ENCODE measurements at regions of chr20 and their contacts with region 1.

Region 1: DNA sequence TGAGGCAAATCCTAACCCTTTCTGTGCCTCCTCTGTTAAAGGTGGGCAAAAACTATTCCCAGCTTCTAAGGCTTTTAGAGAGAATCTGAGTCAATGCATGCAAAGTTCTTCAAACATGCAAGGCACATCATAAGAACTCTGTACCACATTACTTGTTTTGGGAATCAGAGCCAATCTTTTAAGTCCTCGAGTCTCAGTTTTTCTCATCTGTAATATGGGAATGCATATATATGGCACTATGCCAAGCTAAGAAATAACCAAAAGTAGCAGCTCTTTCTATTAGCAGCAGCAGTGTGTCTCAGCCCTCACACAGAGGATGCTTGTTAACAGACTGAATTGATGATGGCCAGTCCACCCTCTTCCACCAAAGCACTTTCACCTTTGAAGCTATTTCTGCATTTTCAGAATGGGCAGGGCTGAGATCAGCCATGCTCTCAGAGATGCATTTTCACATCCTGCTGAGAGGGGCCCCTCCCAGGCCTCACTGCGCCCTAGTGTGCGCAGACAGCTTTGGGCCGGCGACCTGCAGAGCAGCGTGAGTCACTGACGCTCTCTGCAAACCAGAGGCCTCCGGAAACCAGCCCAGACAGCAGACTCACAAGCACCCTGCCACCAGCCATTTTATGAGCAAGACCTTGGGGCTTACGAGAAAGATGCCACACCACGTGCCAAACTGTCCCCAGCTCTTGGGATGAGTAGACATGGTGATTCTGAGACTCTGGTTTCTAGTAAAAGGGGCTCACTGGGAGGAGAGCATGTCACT is 138.0 kb downstream of the NFATC2 start:
- DNase-seq: peak; percentile 85
- H3K4me3 Mint-ChIP-seq: peak overlapping the region; percentile 52
- H3K27ac Mint-ChIP-seq: peak overlapping the region; percentile 96
- H3K4me1 Mint-ChIP-seq: peaks cover 93% of the 10 kb centered on the region
- H3K27me3 Mint-ChIP-seq: no peaks in the 10 kb centered on the region

Region 2: GRCh38 chr20:50911030-50911429 is 493.4 kb before region 1 on chr20:
- intact Hi-C with region 1: no loop called
- DNase-seq: no peak
- H3K4me3 Mint-ChIP-seq: no peak overlapping the region
- H3K27ac Mint-ChIP-seq: peak overlapping the region; percentile 72
- H3K4me1 Mint-ChIP-seq: peaks cover 48% of the 10 kb centered on the region
- H3K27me3 Mint-ChIP-seq: no peaks in the 10 kb centered on the region

Region 3: DNA sequence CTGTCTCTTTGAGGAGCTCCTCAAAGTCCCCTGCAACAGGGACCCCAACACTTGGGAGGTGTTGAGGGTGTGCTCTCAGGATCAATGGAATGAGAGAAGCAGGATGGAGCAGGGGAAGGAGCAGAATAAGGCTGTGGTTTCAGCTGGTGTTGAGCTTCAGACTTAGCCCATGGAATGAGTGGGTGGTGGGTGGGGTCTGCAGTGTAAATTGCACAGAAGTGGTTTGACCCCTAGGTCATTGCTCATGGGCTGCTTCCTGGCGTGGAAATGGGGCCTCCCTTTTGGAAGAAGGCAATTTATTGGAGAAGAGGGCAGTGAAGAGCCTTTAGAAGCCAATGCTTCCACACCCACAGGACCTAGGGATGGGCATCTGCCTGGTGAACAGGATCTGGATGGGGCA is 344.6 kb before region 1 on chr20:
- intact Hi-C with region 1: loop called (anchors 5 kb)
- DNase-seq: no peak
- H3K4me3 Mint-ChIP-seq: no peak overlapping the region
- H3K27ac Mint-ChIP-seq: no peak overlapping the region
- H3K4me1 Mint-ChIP-seq: peaks cover 32% of the 10 kb centered on the region
- H3K27me3 Mint-ChIP-seq: peaks cover 10% of the 10 kb centered on the region

Region 4: GRCh38 chr20:51423290-51423667 is 18.8 kb after region 1 on chr20:
- intact Hi-C with region 1: loop called (anchors 1 kb)
- DNase-seq: no peak
- H3K4me3 Mint-ChIP-seq: peak overlapping the region; percentile 22
- H3K27ac Mint-ChIP-seq: peak overlapping the region; percentile 72
- H3K4me1 Mint-ChIP-seq: peaks cover 77% of the 10 kb centered on the region
- H3K27me3 Mint-ChIP-seq: no peaks in the 10 kb centered on the region

Region 5: DNA sequence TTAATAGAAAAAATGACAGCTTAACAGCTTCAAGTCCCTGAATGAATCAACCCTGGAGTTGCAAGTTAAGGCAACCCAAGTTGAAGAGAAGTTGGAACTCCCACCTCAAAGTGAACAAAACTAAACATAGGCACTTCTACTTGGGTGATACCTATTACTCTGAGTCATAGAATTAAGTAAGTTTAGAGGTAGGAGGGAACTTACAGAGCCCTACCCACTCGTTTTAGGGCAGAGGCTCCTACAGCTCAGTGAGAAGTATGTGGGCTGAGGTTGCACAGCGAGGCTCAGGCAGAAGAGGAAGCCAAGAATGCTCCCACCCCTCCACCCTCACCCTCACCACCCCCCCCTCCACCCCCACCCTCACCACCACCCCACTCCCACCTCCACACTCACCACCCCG is 95.8 kb after region 1 on chr20:
- intact Hi-C with region 1: loop called (anchors 1 kb)
- DNase-seq: peak; percentile 48
- H3K4me3 Mint-ChIP-seq: no peak overlapping the region
- H3K27ac Mint-ChIP-seq: peak overlapping the region; percentile 81
- H3K4me1 Mint-ChIP-seq: peaks cover 86% of the 10 kb centered on the region
- H3K27me3 Mint-ChIP-seq: no peaks in the 10 kb centered on the region

Region 6: DNA sequence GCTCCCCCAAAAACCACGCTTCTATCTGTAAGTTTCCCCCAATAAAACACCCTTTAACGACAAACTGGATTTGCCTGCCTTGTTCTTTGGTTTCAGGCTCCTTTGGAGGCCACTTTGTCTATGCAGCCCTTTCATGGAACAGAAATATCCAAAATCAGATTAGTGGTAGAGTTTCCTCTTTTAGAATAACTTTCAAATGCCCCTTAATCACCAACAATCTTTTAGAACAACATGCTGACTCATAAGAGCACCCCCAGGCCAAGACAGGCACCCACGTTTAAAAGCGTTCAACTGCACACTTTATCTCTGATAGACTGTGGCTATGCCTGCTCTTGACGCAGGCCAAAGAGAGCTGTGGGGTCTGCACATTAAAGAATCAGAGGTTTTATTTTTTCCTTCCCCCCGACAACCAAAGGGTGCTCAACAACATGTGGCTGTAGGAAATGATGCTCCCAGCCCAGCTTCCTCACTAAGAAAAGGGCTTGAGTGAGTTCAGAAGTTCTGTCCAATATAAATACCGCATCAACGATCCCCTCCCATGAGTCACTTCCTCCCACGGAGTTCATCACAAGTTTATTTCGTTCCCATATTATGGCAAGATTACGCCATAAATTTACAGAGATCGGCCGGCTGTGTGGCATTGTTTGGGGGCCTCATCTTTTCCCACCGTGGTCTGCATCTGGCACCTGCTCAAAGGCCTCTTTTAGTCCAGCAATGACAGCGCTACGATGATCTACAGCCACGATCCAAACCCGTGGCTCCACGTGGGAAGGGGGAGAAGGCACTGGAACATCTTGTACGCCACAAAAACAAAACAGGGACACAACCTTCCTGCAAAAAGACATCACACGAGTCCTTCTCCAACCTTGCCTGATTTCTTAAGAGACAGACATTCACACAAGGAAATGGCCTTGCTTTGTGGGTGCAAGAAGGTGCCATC is 226.8 kb after region 1 on chr20:
- intact Hi-C with region 1: loop called (anchors 2 kb)
- DNase-seq: peak; percentile 7
- H3K4me3 Mint-ChIP-seq: peak overlapping the region; percentile 5
- H3K27ac Mint-ChIP-seq: peak overlapping the region; percentile 70
- H3K4me1 Mint-ChIP-seq: peaks cover 43% of the 10 kb centered on the region
- H3K27me3 Mint-ChIP-seq: peaks cover 7% of the 10 kb centered on the region

Measured in activated T-helper 1 cell treated with anti-CD3 and anti-CD28 coated beads, Interleukin-12 subunit alpha, Interleukin-12 subunit beta, Interleukin-2, Interleukin-4 antibody, amounts not matched to agents 30 ng/mL and 10 ng/mL and 1 ng/mL, durations not matched to agents 14 hours and 24 hours and 36 hours (primary cell).